ENCODE measurements at regions of chr9 and their contacts with region 1.

Region 1: GRCh38 chr9:88418715-88419540 is 30.7 kb downstream of the SPIN1 start:
- DNase-seq: peak; percentile 18
- H3K4me3 Mint-ChIP-seq: no peak overlapping the region
- H3K27ac Mint-ChIP-seq: peak overlapping the region; percentile 78
- H3K4me1 Mint-ChIP-seq: peaks cover 20% of the 10 kb centered on the region
- H3K27me3 Mint-ChIP-seq: no peaks in the 10 kb centered on the region

Region 2: DNA sequence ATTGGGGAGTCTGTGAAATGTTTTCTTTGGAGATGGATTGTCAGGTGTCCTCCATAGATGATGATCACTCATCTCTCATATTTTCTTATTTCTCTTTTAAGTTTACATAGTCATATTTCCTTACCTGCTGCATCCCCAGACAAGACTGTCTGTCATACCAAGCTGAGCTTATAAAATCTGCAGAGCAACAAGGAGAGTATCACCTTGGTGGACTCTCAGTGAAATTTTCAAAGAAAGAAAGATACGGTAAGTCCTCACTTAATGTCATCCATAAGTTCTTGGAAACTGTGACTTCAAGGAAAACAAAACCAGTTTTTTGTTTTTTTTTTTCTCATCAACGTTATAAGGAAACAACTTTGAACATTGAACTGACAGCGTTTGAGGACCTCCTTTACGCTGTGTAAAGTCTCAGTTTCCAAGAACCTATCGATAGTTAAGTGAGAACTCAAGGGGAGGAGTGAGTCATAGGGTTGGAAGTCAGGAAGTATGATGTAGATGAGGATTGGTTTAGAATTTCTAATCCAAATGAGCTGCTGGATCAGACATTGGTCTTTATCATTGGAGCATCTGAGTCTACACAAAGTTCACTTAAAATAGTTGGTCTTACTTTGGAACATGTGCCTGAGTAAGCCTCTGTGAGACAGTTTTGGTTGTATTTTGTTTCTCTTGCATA is 14.8 kb after region 1 on chr9:
- intact Hi-C with region 1: loop called (anchors 2 kb)
- DNase-seq: no peak
- H3K4me3 Mint-ChIP-seq: peak overlapping the region; percentile 59
- H3K27ac Mint-ChIP-seq: peak overlapping the region; percentile 78
- H3K4me1 Mint-ChIP-seq: peaks cover 45% of the 10 kb centered on the region
- H3K27me3 Mint-ChIP-seq: no peaks in the 10 kb centered on the region

Region 3: GRCh38 chr9:88460587-88461332 is 41.8 kb after region 1 on chr9:
- intact Hi-C with region 1: loop called (anchors 2 kb)
- DNase-seq: no peak
- H3K4me3 Mint-ChIP-seq: no peak overlapping the region
- H3K27ac Mint-ChIP-seq: peak overlapping the region; percentile 41
- H3K4me1 Mint-ChIP-seq: peaks cover 17% of the 10 kb centered on the region
- H3K27me3 Mint-ChIP-seq: no peaks in the 10 kb centered on the region